ENCODE measurements at regions of chr16 and their contacts with region 1.

Region 1: GRCh38 chr16:46673320-46674013 is 15.5 kb downstream of the VPS35 start:
- DNase-seq: peak in 1 of 2 experiments; percentile 33
- H3K4me3 ChIP-seq: no peak overlapping the region
- H3K27ac ChIP-seq: no peak overlapping the region
- H3K4me1 ChIP-seq: no peaks in the 10 kb centered on the region
- H3K27me3 ChIP-seq: no peaks in the 10 kb centered on the region
- CTCF ChIP-seq: peak; percentile 86

Region 2: GRCh38 chr16:46789499-46790414 is 116.3 kb after region 1 on chr16:
- CTCF ChIA-PET with region 1: no interaction called
- POLR2A ChIA-PET with region 1: interaction called, 11 read pairs
- intact Hi-C with region 1: no loop called
- DNase-seq: peak in 1 of 2 experiments; percentile 72
- H3K4me3 ChIP-seq: peak overlapping the region; percentile 84
- H3K27ac ChIP-seq: no peak overlapping the region
- H3K4me1 ChIP-seq: peaks cover 4% of the 10 kb centered on the region; the same call in 1 of the 2 replicates
- H3K27me3 ChIP-seq: no peaks in the 10 kb centered on the region
- CTCF ChIP-seq: no peak

Region 3: DNA sequence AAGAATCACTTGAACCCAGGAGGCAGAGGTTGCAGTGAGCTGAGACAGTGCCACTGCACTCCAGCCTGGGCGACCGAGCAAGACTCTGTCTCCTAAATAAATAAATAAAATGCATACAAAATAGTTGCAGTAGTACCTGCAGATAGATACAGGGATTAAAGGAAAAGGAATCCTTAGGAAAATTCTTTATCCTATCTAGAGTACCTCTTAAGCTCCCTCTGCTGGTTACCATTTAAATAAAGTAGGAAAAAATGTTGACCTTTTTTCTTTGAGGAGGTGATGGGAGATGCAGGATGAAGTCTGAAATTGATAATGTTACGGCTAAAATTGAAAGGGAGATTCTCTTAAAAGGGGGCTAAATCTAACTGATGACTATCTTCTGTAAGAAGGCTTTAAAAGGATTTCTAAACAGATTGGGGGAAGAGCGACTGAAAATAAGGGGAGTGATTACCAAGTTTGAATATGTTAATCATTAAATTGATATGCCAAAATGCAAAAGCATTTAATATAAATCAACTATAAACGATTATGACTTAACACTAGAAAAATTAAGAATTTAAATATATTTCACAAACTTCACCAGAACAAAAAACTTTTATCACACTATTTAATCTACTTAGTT is 128.1 kb after region 1 on chr16:
- CTCF ChIA-PET with region 1: interaction called, 4 read pairs
- POLR2A ChIA-PET with region 1: no interaction called
- intact Hi-C with region 1: loop called (anchors 5 kb)
- DNase-seq: no peak
- H3K4me3 ChIP-seq: no peak overlapping the region
- H3K27ac ChIP-seq: no peak overlapping the region
- H3K4me1 ChIP-seq: no peaks in the 10 kb centered on the region
- H3K27me3 ChIP-seq: no peaks in the 10 kb centered on the region
- CTCF ChIP-seq: peak; percentile 68

Region 4: GRCh38 chr16:46908540-46909372 is 235.3 kb after region 1 on chr16:
- CTCF ChIA-PET with region 1: interaction called, 11 read pairs
- POLR2A ChIA-PET with region 1: no interaction called
- intact Hi-C with region 1: loop called (anchors 1 kb)
- DNase-seq: peak; percentile 44 to 52
- H3K4me3 ChIP-seq: no peak overlapping the region
- H3K27ac ChIP-seq: no peak overlapping the region
- H3K4me1 ChIP-seq: no peaks in the 10 kb centered on the region
- H3K27me3 ChIP-seq: no peaks in the 10 kb centered on the region
- CTCF ChIP-seq: peak; percentile 89

Measured in PC-9 (cell line).